Lower leg skin (tissue), 4 donors: ENCODE measurements at regions of chr6 and their contacts with region 1.

Region 1: GRCh38 chr6:7238900-7239589 is 74.0 kb downstream of the SSR1 start:
- DNase-seq: peak; percentile 84 to 96
- H3K4me3 ChIP-seq: no peak overlapping the region
- CTCF ChIP-seq: peak in 1 of 3 donors; percentile 63
- POLR2A ChIP-seq: no peak

Region 2: DNA sequence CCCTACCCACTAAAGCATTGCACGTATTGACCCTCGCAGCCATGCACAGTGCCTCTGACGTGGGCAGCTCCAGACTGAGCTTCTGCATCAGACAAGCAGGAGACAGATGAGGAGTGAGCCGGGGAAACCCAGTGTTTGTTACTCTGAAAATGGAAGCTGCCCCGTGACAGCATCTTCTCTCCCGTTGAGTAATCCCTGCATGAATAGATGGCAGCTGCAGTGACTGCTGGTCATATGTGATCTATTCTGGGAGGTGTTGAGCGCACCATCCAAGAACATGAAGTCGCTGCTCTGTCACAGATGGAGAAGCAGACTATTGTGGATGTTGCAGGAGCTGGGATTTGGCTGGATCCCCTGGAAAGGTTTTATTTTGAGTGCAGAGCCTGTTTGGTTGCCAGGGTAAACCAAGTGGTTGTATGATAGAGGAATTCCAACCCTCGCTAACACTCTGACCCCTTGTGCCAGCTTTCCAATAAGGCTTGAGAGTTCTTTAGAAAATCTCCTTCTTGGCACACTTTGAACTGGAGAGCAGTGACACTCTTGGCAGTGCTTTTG is 1474.6 kb before region 1 on chr6:
- intact Hi-C with region 1: no loop called
- DNase-seq: peak; percentile 49 to 80
- H3K4me3 ChIP-seq: no peak overlapping the region
- CTCF ChIP-seq: no peak
- POLR2A ChIP-seq: no peak

Region 3: GRCh38 chr6:6676910-6677441 is 562.1 kb before region 1 on chr6:
- intact Hi-C with region 1: loop called (anchors 10 kb)
- DNase-seq: peak; percentile 87 to 97
- H3K4me3 ChIP-seq: no peak overlapping the region
- CTCF ChIP-seq: peak in 2 of 3 donors; percentile 70 to 83
- POLR2A ChIP-seq: no peak

Region 4: GRCh38 chr6:6724539-6725467 is 514.2 kb before region 1 on chr6:
- intact Hi-C with region 1: loop called (anchors 5 kb)
- DNase-seq: peak; percentile 72 to 92
- H3K4me3 ChIP-seq: no peak overlapping the region
- CTCF ChIP-seq: no peak
- POLR2A ChIP-seq: no peak

Region 5: GRCh38 chr6:6901205-6901731 is 337.8 kb before region 1 on chr6:
- intact Hi-C with region 1: loop called (anchors 10 kb)
- DNase-seq: peak in 1 of 2 donors; percentile 72
- H3K4me3 ChIP-seq: no peak overlapping the region
- CTCF ChIP-seq: no peak
- POLR2A ChIP-seq: no peak

Region 6: GRCh38 chr6:7216941-7217621 is 22.0 kb before region 1 on chr6:
- intact Hi-C with region 1: loop called (anchors 1 kb)
- DNase-seq: peak in 1 of 2 donors; percentile 86
- H3K4me3 ChIP-seq: no peak overlapping the region
- CTCF ChIP-seq: no peak
- POLR2A ChIP-seq: no peak

Region 7: DNA sequence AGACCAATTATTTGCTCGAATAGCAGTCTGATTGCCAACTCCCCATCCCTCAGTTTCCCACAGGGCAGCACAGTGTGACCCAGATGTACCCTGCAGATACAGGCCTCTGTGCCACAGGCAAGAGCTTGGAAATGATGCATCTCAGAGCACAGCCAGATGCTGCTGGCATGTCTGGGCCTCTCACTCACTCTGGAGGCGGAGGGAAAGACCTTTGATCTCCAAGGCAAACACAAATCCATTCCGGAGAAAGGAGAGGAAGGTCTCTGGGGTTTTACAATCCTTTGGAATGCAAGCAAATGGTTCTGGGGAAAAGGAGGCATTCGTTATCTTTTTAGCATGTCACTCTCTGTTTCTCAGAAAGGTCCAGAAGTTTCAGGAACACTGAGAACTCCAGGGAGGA is 224.7 kb after region 1 on chr6:
- intact Hi-C with region 1: no loop called
- DNase-seq: no peak
- H3K4me3 ChIP-seq: no peak overlapping the region
- CTCF ChIP-seq: no peak
- POLR2A ChIP-seq: no peak